WTC11 (cell line): ENCODE measurements at regions of chr2 and their contacts with region 1.

Region 1: GRCh38 chr2:31414601-31415241 is at the start of gene XDH:
- DNase-seq: no peak
- ATAC-seq: no peak
- H3K4me3 Mint-ChIP-seq: no peak within 1 kb of the TSS
- H3K27ac Mint-ChIP-seq: peak within 1 kb of the TSS; percentile 66; the same call in 1 of the 2 replicates
- H3K4me1 Mint-ChIP-seq: no peaks in the 10 kb centered on the region; the same call in 1 of the 2 replicates
- H3K27me3 Mint-ChIP-seq: no peaks in the 10 kb centered on the region
- CTCF ChIP-seq: no peak
- total RNA-seq, gene XDH: 3.0 to 3.7 TPM (median 3.7 TPM) in 3 replicates

Region 2: GRCh38 chr2:31401580-31401979 is 13.1 kb before region 1 on chr2:
- CTCF ChIA-PET with region 1: interaction called, 7 read pairs
- POLR2A ChIA-PET with region 1: interaction called, 10 read pairs
- DNase-seq: no peak
- ATAC-seq: peak; percentile 74
- H3K4me3 Mint-ChIP-seq: no peak overlapping the region
- H3K27ac Mint-ChIP-seq: no peak overlapping the region; the same call in 1 of the 2 replicates
- H3K4me1 Mint-ChIP-seq: peaks cover 17% of the 10 kb centered on the region
- H3K27me3 Mint-ChIP-seq: no peaks in the 10 kb centered on the region
- CTCF ChIP-seq: no peak